ENCODE measurements at regions of chr11 and their contacts with region 1.

Region 1: GRCh38 chr11:47847892-47848635 is at the start of gene NUP160:
- DNase-seq: peak; percentile 92
- ATAC-seq: peak; percentile 77
- H3K4me3 ChIP-seq: peak within 1 kb of the TSS; percentile 93 to 99 (median 98)
- H3K4me3 Mint-ChIP-seq: peak within 1 kb of the TSS; percentile 99
- H3K27ac ChIP-seq: peak within 1 kb of the TSS; percentile 94 to 95
- H3K27ac Mint-ChIP-seq: peak within 1 kb of the TSS; percentile 98
- H3K4me1 ChIP-seq: peaks cover 62 to 66% of the 10 kb centered on the region in 2 donors
- H3K4me1 Mint-ChIP-seq: peaks cover 57% of the 10 kb centered on the region
- H3K27me3 ChIP-seq: no peaks in the 10 kb centered on the region
- H3K27me3 Mint-ChIP-seq: no peaks in the 10 kb centered on the region
- CTCF ChIP-seq: no peak
- total RNA-seq, gene NUP160: 74.3 and 77.3 TPM in 2 replicates

Region 2: GRCh38 chr11:47373876-47374720 is 474.0 kb before region 1 on chr11:
- CTCF ChIA-PET with region 1: interaction called, 3 read pairs
- POLR2A ChIA-PET with region 1: no interaction called
- intact Hi-C with region 1: loop called (anchors 1 kb)
- DNase-seq: peak; percentile 83
- ATAC-seq: peak; percentile 35
- H3K4me3 ChIP-seq: no peak overlapping the region
- H3K4me3 Mint-ChIP-seq: peak overlapping the region; percentile 41
- H3K27ac ChIP-seq: peak overlapping the region in 1 of 2 donors; percentile 68
- H3K27ac Mint-ChIP-seq: peak overlapping the region; percentile 65
- H3K4me1 ChIP-seq: peaks cover 40 to 46% of the 10 kb centered on the region in 2 donors
- H3K4me1 Mint-ChIP-seq: peaks cover 51% of the 10 kb centered on the region
- H3K27me3 ChIP-seq: no peaks in the 10 kb centered on the region
- H3K27me3 Mint-ChIP-seq: no peaks in the 10 kb centered on the region
- CTCF ChIP-seq: peak; percentile 91

Region 3: GRCh38 chr11:47631473-47631872 is 216.6 kb before region 1 on chr11:
- CTCF ChIA-PET with region 1: no interaction called
- POLR2A ChIA-PET with region 1: no interaction called
- intact Hi-C with region 1: no loop called
- DNase-seq: no peak
- ATAC-seq: no peak
- H3K4me3 ChIP-seq: no peak overlapping the region
- H3K4me3 Mint-ChIP-seq: no peak overlapping the region
- H3K27ac ChIP-seq: no peak overlapping the region
- H3K27ac Mint-ChIP-seq: no peak overlapping the region
- H3K4me1 ChIP-seq: no peaks in the 10 kb centered on the region
- H3K4me1 Mint-ChIP-seq: no peaks in the 10 kb centered on the region
- H3K27me3 ChIP-seq: no peaks in the 10 kb centered on the region
- H3K27me3 Mint-ChIP-seq: no peaks in the 10 kb centered on the region
- CTCF ChIP-seq: no peak

Region 4: DNA sequence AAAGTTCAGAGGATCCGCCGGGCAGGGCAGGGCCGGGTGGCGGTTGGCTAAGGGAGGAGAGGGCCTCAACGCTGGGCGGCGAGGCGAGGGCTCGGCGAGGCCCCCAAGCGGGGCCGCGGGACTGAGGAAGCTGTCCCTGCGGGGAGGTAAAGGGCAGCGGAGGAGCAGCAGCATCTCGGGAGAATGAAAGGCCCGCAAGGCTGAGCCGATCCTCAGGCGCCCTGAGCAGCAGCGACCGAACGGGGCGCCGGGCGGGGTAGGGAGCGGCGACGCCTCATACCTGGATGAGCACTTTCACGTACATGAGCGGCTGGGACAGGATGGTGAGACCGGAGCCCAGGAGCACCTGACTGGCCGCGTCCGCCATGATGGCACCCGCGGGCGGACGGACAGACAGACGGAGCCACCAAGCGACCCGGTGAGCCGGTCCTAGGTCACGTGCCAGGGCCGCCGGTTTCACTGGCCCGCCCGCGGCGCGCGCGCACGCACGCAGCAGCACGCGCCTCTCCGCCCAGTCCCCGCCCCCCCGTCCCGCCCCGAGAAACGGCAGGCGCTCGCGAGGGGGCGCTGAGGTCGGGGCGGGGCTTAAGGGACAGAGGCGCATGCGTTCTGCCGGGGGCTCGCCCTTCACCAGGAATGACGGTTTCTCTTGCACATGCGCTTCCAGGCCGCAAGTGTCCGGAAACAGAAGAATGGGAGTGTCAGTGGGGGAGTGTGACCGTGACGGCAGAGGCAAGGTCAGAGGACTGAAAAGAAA is 205.8 kb before region 1 on chr11 and contains the start of gene MTCH2:
- CTCF ChIA-PET with region 1: no interaction called
- POLR2A ChIA-PET with region 1: no interaction called
- intact Hi-C with region 1: loop called (anchors 1 kb)
- DNase-seq: peak; percentile 99
- ATAC-seq: peak; percentile 94
- H3K4me3 ChIP-seq: peak within 1 kb of the TSS; percentile 79 to 86 (median 79)
- H3K4me3 Mint-ChIP-seq: peak within 1 kb of the TSS; percentile 93
- H3K27ac ChIP-seq: peak within 1 kb of the TSS; percentile 92
- H3K27ac Mint-ChIP-seq: peak within 1 kb of the TSS; percentile 96
- H3K4me1 ChIP-seq: peaks cover 13 to 21% of the 10 kb centered on the region in 2 donors
- H3K4me1 Mint-ChIP-seq: peaks cover 23% of the 10 kb centered on the region
- H3K27me3 ChIP-seq: no peaks in the 10 kb centered on the region
- H3K27me3 Mint-ChIP-seq: no peaks in the 10 kb centered on the region
- CTCF ChIP-seq: peak; percentile 29
- total RNA-seq, gene MTCH2: 26.9 and 30.9 TPM in 2 replicates

Region 5: GRCh38 chr11:47705721-47706120 is 142.3 kb before region 1 on chr11:
- CTCF ChIA-PET with region 1: no interaction called
- POLR2A ChIA-PET with region 1: no interaction called
- intact Hi-C with region 1: no loop called
- DNase-seq: no peak
- ATAC-seq: no peak
- H3K4me3 ChIP-seq: no peak overlapping the region
- H3K4me3 Mint-ChIP-seq: no peak overlapping the region
- H3K27ac ChIP-seq: no peak overlapping the region
- H3K27ac Mint-ChIP-seq: no peak overlapping the region
- H3K4me1 ChIP-seq: no peaks in the 10 kb centered on the region
- H3K4me1 Mint-ChIP-seq: no peaks in the 10 kb centered on the region
- H3K27me3 ChIP-seq: no peaks in the 10 kb centered on the region
- H3K27me3 Mint-ChIP-seq: no peaks in the 10 kb centered on the region
- CTCF ChIP-seq: no peak

Region 6: GRCh38 chr11:47797633-47798032 is 50.4 kb before region 1 on chr11:
- CTCF ChIA-PET with region 1: no interaction called
- POLR2A ChIA-PET with region 1: no interaction called
- intact Hi-C with region 1: no loop called
- DNase-seq: no peak
- ATAC-seq: no peak
- H3K4me3 ChIP-seq: no peak overlapping the region
- H3K4me3 Mint-ChIP-seq: no peak overlapping the region
- H3K27ac ChIP-seq: no peak overlapping the region
- H3K27ac Mint-ChIP-seq: no peak overlapping the region
- H3K4me1 ChIP-seq: no peaks in the 10 kb centered on the region
- H3K4me1 Mint-ChIP-seq: no peaks in the 10 kb centered on the region
- H3K27me3 ChIP-seq: no peaks in the 10 kb centered on the region
- H3K27me3 Mint-ChIP-seq: no peaks in the 10 kb centered on the region
- CTCF ChIP-seq: no peak

Region 7: DNA sequence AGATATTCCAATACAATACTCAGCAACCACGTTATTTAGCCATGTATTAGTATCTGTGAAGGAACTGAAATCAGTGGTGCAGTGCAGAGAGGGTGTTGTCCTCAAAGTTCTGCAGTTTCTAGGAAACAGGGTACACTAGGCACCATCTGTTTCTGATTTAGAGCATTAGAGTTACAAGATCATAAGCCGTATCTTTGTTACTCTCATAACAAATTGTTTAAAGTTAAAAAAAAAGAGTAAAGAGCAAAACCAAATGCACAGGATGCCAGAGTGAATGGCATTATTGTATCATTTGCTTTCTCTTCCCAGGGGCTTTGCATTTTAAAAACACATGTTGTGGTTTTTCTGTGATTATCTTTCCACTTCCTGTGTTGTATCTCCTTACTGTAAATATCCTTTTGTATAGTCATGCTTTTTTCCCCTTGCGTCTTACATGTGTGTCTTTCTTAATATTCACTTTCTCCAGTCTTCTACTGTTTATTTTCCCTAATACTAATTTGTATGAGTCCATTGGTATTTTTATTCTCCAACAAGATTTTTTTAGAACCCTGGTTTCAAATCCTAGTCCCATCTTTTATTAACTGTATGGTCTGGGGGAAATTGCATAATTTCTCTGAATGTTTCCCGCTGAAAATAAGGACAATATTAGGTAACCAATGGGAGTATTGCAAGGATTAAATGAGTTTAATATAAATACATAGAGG is 15.3 kb after region 1 on chr11:
- CTCF ChIA-PET with region 1: interaction called, 18 read pairs
- POLR2A ChIA-PET with region 1: interaction called, 3 read pairs
- intact Hi-C with region 1: loop called (anchors 2 kb)
- DNase-seq: peak; percentile 82
- ATAC-seq: peak; percentile 81
- H3K4me3 ChIP-seq: peak overlapping the region in 1 of 5 experiments; percentile 52
- H3K4me3 Mint-ChIP-seq: peak overlapping the region; percentile 46
- H3K27ac ChIP-seq: peak overlapping the region; percentile 77 to 78
- H3K27ac Mint-ChIP-seq: peak overlapping the region; percentile 85
- H3K4me1 ChIP-seq: peaks cover 72 to 81% of the 10 kb centered on the region in 2 donors
- H3K4me1 Mint-ChIP-seq: peaks cover 63% of the 10 kb centered on the region
- H3K27me3 ChIP-seq: no peaks in the 10 kb centered on the region
- H3K27me3 Mint-ChIP-seq: no peaks in the 10 kb centered on the region
- CTCF ChIP-seq: no peak

Region 8: DNA sequence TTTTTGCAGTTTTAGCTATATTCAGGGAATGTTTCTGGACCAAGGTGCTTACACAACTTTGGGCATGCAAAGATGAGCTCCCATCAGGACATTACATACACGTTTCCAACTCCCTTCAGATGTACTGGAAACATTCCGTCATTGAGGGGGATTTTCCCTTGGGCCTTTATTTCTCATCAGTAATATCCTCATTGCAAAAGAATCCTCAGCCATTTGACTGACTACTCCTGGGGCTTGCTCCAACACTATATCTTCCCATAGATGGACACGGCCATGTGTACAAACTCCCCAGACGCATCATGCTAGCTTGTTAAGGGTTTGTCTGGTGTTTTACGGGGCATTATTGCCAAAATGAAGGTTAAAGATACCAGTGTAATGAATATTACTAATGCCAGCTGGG is 59.4 kb after region 1 on chr11:
- CTCF ChIA-PET with region 1: no interaction called
- POLR2A ChIA-PET with region 1: no interaction called
- intact Hi-C with region 1: no loop called
- DNase-seq: no peak
- ATAC-seq: no peak
- H3K4me3 ChIP-seq: no peak overlapping the region
- H3K4me3 Mint-ChIP-seq: no peak overlapping the region
- H3K27ac ChIP-seq: no peak overlapping the region
- H3K27ac Mint-ChIP-seq: no peak overlapping the region
- H3K4me1 ChIP-seq: peaks cover 7 to 10% of the 10 kb centered on the region in 2 donors
- H3K4me1 Mint-ChIP-seq: peaks cover 26% of the 10 kb centered on the region
- H3K27me3 ChIP-seq: no peaks in the 10 kb centered on the region
- H3K27me3 Mint-ChIP-seq: no peaks in the 10 kb centered on the region
- CTCF ChIP-seq: no peak

Region 9: DNA sequence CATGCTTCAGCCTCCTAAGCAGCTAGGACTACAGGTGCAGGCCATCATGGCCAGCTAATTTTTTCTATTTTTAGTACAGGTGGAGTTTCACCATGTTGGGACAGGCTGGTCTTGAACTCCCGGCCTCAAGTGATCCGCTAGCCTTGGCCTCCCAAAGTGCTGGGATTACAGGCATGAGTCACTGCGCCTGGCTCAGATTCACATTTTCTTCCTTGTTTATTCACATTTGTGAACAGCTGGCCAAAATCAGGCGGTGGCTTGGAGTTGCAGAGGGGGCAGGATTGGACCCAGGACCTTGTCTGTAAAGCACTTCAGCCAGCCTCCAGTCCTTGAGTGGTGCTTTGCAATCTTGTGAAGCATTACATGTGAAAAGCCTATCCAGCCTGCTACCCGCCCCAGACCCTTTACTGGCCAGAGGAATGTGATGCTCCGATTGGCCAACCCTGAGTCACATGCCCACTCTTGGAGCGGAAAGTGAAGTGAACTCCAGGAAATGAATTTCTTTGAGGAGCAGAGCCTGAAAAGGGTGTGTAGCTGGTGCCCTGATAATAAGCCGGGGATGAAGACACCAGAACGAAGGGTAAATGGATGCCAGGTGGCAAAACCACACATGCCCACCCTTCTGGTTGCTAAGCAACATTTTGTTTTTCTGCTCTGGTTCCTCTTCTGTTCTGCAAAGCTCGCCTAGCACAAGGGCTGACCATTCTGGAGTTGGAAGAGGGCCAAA is 69.7 kb after region 1 on chr11:
- CTCF ChIA-PET with region 1: interaction called, 44 read pairs
- POLR2A ChIA-PET with region 1: interaction called, 3 read pairs
- intact Hi-C with region 1: no loop called
- DNase-seq: peak; percentile 93
- ATAC-seq: peak; percentile 69
- H3K4me3 ChIP-seq: peak overlapping the region in 1 of 5 experiments; percentile 20
- H3K4me3 Mint-ChIP-seq: peak overlapping the region; percentile 61
- H3K27ac ChIP-seq: peak overlapping the region; percentile 89 to 93
- H3K27ac Mint-ChIP-seq: peak overlapping the region; percentile 98
- H3K4me1 ChIP-seq: peaks cover 87 to 98% of the 10 kb centered on the region in 2 donors
- H3K4me1 Mint-ChIP-seq: peaks cover 84% of the 10 kb centered on the region
- H3K27me3 ChIP-seq: no peaks in the 10 kb centered on the region
- H3K27me3 Mint-ChIP-seq: no peaks in the 10 kb centered on the region
- CTCF ChIP-seq: no peak

Measured in B cell (primary cell).